CD4-positive, alpha-beta memory T cell (primary cell): ENCODE measurements at regions of chr17 and their contacts with region 1.

Region 1: DNA sequence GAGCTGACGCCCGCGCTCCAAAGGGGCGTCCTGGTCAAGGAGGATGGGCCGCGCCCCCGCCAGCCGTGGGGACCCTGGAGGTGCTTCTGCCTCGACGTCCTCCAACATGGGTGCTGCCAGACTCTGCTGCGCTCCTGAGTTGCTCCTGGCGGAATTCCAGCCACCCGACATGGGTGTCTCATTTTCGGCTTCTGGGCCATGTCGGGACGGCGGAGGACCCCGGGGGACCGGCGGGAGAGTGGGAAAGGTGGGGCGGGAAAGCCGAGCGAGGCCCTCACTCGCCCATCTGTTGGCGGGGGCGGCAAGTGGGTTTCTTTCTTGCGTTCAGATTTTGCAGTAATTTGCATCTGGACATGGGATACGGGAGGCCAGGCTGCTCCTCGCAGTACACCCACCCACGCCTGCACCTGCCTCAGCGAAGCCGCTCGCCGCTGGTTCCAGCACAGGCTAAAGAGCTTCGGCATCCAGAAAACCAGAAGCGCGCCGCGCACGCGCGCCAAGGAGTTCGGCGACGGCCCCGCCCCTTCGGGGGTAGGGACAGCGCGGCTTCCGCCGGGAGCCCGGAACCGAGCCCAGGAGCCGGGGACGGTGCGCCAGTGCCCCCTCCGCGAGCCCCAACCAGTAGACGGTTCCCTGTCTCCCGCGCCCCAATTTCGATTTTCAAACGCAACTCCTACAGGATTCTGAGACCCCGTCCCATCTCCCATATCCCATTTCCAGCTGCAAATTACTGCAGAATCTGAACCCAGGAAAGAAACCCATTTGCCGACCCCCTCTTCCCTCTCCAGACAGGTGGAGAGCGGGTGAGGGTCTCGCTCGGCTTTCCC is at the start of gene ARMC7:
- DNase-seq: peak; percentile 85 to 89 (median 88)
- H3K4me3 ChIP-seq: peak within 1 kb of the TSS; percentile 69 to 84
- H3K4me3 Mint-ChIP-seq: peak within 1 kb of the TSS; percentile 88 to 93 (median 91)
- H3K27ac ChIP-seq: peak within 1 kb of the TSS; percentile 60
- H3K27ac Mint-ChIP-seq: peak within 1 kb of the TSS; percentile 76 to 96 (median 92)
- H3K4me1 ChIP-seq: peaks cover 41% of the 10 kb centered on the region
- H3K4me1 Mint-ChIP-seq: peaks cover 22 to 42% (median 31%) of the 10 kb centered on the region in 4 donors
- H3K27me3 ChIP-seq: no peaks in the 10 kb centered on the region
- H3K27me3 Mint-ChIP-seq: no peaks in the 10 kb centered on the region
- total RNA-seq, gene ARMC7: 20.0 to 21.9 TPM

Region 2: GRCh38 chr17:74961657-74962490 is 147.7 kb before region 1 on chr17:
- CTCF ChIA-PET with region 1: interaction called, 89 read pairs
- POLR2A ChIA-PET with region 1: interaction called, 4 read pairs
- intact Hi-C with region 1: loop called (anchors 1 kb)
- DNase-seq: peak; percentile 76 to 80 (median 77)
- H3K4me3 ChIP-seq: no peak overlapping the region
- H3K4me3 Mint-ChIP-seq: peak overlapping the region in 1 of 8 donors; percentile 31
- H3K27ac ChIP-seq: no peak overlapping the region
- H3K27ac Mint-ChIP-seq: peak overlapping the region in 2 of 7 donors; percentile 59 to 66
- H3K4me1 ChIP-seq: peaks cover 6% of the 10 kb centered on the region
- H3K4me1 Mint-ChIP-seq: peaks cover 4 to 13% (median 8%) of the 10 kb centered on the region in 4 donors
- H3K27me3 ChIP-seq: no peaks in the 10 kb centered on the region
- H3K27me3 Mint-ChIP-seq: no peaks in the 10 kb centered on the region

Region 3: DNA sequence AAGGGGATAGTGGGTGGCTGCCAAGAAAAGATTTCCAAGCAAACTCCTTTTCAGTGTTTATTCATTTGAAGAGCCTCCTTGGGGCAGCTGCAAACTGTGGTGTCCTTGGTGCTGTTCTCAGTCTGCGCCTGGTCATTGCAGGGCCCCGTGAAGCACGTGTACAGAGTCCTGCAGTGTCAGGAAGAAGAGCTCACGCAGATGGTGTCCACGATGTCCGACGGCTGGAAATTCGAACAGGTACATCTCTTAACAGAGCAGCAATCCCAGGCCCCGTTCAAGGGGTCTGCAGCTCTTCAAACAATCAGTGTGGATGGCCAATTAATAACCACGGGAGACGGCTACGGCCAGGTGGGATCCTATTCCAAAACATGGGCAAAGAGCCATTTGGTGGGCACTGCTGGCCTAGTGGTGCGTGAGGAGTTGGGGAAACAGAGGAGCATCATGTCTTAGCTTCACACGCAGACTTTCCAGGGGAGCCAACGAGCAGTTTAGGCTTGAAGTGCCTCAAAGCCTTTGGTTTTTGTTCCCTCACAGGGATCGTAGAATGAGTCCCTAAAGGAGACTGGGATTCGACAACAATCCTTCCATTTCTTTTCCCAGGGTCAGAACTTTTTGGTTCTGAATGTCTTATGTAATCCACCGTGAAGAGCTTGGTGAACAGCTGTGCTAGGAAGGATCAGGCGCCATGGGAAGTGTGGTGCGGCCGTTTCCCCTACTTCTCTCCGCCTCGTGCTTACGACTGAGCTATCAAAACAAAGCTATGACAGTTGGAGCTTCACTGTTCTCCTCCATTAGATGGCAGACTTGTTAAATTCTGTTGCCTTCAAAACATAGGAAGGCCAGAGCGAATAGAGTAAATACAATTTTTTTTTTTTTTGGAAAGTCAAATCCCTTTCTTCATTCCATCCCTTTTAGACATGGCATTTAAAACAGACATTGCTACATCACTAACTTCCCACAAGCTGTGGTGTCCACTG is 50.0 kb before region 1 on chr17:
- CTCF ChIA-PET with region 1: interaction called, 17 read pairs
- POLR2A ChIA-PET with region 1: interaction called, 3 read pairs
- intact Hi-C with region 1: no loop called
- DNase-seq: peak in 2 of 5 donors; percentile 20 to 26
- H3K4me3 ChIP-seq: no peak overlapping the region
- H3K4me3 Mint-ChIP-seq: no peak overlapping the region
- H3K27ac ChIP-seq: no peak overlapping the region
- H3K27ac Mint-ChIP-seq: peak overlapping the region in 2 of 7 donors; percentile 61 to 78
- H3K4me1 ChIP-seq: no peaks in the 10 kb centered on the region
- H3K4me1 Mint-ChIP-seq: peaks cover 0 to 18% (median 8%) of the 10 kb centered on the region in 4 donors
- H3K27me3 ChIP-seq: no peaks in the 10 kb centered on the region
- H3K27me3 Mint-ChIP-seq: no peaks in the 10 kb centered on the region

Region 4: DNA sequence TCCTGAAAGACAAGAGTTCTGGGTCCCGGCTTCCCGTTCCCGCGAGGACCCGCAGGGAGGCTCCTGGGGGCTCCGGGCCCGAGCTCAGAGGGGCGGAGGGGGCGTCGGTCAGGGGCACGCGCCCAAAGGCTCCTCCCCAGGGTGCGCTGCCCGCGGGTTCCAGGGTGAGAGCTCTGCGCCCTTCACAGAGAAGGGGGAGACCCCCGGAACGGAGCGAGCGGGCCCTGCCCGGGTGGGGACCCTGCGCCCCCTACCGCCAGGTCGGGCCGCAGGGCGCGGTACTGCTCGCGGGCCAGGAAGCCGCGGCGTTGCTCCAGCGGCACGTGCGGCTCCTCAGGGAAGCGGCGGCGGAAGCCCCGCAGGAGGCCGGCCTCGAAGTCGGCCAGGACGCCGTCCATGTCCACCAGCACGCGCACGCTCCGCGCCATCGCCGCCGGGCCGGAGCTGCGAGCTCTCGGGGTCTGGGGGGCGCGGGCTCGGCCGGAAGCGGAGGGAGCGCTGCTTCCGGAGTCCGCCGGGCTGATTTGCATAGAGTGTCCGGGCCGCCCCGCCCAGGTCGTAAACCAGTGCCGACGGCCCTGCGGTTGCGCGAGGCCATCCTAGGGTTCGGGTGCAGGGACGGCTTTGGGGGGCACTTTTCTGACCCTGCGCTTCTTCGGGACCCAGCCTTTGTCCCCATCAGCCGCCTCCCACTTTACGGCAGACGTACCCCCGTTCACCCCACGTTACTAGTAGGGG is 21.8 kb after region 1 on chr17 and contains the start of gene NT5C:
- CTCF ChIA-PET with region 1: interaction called, 127 read pairs
- POLR2A ChIA-PET with region 1: interaction called, 97 read pairs
- intact Hi-C with region 1: loop called (anchors 1 kb)
- DNase-seq: peak in 4 of 5 donors; percentile 38 to 60 (median 49)
- H3K4me3 ChIP-seq: peak within 1 kb of the TSS; percentile 61 to 74
- H3K4me3 Mint-ChIP-seq: peak within 1 kb of the TSS; percentile 87 to 91 (median 90)
- H3K27ac ChIP-seq: peak within 1 kb of the TSS; percentile 80
- H3K27ac Mint-ChIP-seq: peak within 1 kb of the TSS; percentile 81 to 92 (median 88)
- H3K4me1 ChIP-seq: peaks cover 16% of the 10 kb centered on the region
- H3K4me1 Mint-ChIP-seq: peaks cover 8 to 19% (median 11%) of the 10 kb centered on the region in 4 donors
- H3K27me3 ChIP-seq: no peaks in the 10 kb centered on the region
- H3K27me3 Mint-ChIP-seq: no peaks in the 10 kb centered on the region
- total RNA-seq, gene NT5C: 40.1 to 46.6 TPM

Region 5: GRCh38 chr17:75173526-75173925 is 63.9 kb after region 1 on chr17:
- CTCF ChIA-PET with region 1: interaction called, 325 read pairs
- POLR2A ChIA-PET with region 1: interaction called, 29 read pairs
- intact Hi-C with region 1: loop called (anchors 1 kb)
- DNase-seq: no peak
- H3K4me3 ChIP-seq: no peak overlapping the region
- H3K4me3 Mint-ChIP-seq: no peak overlapping the region
- H3K27ac ChIP-seq: no peak overlapping the region
- H3K27ac Mint-ChIP-seq: peak overlapping the region in 4 of 7 donors; percentile 29 to 75 (median 38)
- H3K4me1 ChIP-seq: peaks cover 9% of the 10 kb centered on the region
- H3K4me1 Mint-ChIP-seq: peaks cover 7 to 26% (median 11%) of the 10 kb centered on the region in 4 donors
- H3K27me3 ChIP-seq: no peaks in the 10 kb centered on the region
- H3K27me3 Mint-ChIP-seq: no peaks in the 10 kb centered on the region

Region 6: GRCh38 chr17:75219815-75220214 is 110.2 kb after region 1 on chr17:
- CTCF ChIA-PET with region 1: interaction called, 10 read pairs
- POLR2A ChIA-PET with region 1: no interaction called
- intact Hi-C with region 1: no loop called
- DNase-seq: no peak
- H3K4me3 ChIP-seq: no peak overlapping the region
- H3K4me3 Mint-ChIP-seq: no peak overlapping the region
- H3K27ac ChIP-seq: no peak overlapping the region
- H3K27ac Mint-ChIP-seq: peak overlapping the region in 3 of 7 donors; percentile 52 to 75 (median 52)
- H3K4me1 ChIP-seq: no peaks in the 10 kb centered on the region
- H3K4me1 Mint-ChIP-seq: peaks cover 0 to 3% (median 0%) of the 10 kb centered on the region in 4 donors
- H3K27me3 ChIP-seq: no peaks in the 10 kb centered on the region
- H3K27me3 Mint-ChIP-seq: no peaks in the 10 kb centered on the region

Region 7: DNA sequence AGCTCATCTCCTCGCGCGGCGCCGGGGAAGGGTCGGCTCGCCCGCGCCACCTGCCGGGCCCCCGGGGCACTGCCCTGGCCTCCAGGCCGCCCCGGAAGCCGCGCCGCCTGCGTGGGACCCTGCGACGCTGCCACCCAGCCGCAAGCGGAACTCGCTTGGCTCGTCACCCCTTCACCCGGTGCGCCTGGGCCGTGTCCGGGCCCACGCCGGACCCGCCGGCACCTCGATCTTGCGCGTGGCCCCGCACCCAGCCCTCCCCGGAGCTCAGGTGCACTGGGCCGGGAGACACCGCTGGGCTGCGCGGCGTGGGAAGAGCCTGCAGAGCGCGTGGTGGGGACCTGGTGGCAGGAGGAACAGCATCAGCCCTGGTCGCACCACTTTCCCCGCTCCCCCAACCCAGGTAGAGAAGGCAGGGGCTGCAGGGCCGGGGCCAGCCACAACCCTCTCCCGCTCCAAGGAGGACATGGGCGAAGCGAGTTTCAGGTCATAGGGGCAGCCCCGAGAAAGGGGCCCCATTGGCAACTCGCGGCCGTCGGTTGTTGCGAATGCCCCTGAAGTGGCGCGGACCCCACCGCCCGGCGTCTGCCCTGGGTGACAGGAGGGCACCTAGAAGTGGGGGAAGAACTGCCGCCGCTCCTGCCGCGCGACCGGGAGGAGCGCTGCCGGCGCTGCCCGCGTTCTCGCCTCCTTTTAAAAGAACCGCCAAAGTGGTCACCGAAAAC is 161.8 kb after region 1 on chr17:
- CTCF ChIA-PET with region 1: interaction called, 25 read pairs
- POLR2A ChIA-PET with region 1: interaction called, 19 read pairs
- intact Hi-C with region 1: no loop called
- DNase-seq: peak; percentile 86 to 94 (median 88)
- H3K4me3 ChIP-seq: peak overlapping the region; percentile 42 to 82
- H3K4me3 Mint-ChIP-seq: peak overlapping the region; percentile 80 to 91 (median 84)
- H3K27ac ChIP-seq: peak overlapping the region; percentile 89
- H3K27ac Mint-ChIP-seq: peak overlapping the region; percentile 25 to 94 (median 88)
- H3K4me1 ChIP-seq: peaks cover 27% of the 10 kb centered on the region
- H3K4me1 Mint-ChIP-seq: peaks cover 10 to 35% (median 22%) of the 10 kb centered on the region in 4 donors
- H3K27me3 ChIP-seq: no peaks in the 10 kb centered on the region
- H3K27me3 Mint-ChIP-seq: no peaks in the 10 kb centered on the region

Region 8: GRCh38 chr17:75309025-75309772 is 199.6 kb after region 1 on chr17:
- CTCF ChIA-PET with region 1: no interaction called
- POLR2A ChIA-PET with region 1: no interaction called
- intact Hi-C with region 1: no loop called
- DNase-seq: no peak
- H3K4me3 ChIP-seq: no peak overlapping the region
- H3K4me3 Mint-ChIP-seq: no peak overlapping the region
- H3K27ac ChIP-seq: no peak overlapping the region
- H3K27ac Mint-ChIP-seq: peak overlapping the region in 1 of 7 donors; percentile 22
- H3K4me1 ChIP-seq: no peaks in the 10 kb centered on the region
- H3K4me1 Mint-ChIP-seq: peaks cover 0 to 2% (median 0%) of the 10 kb centered on the region in 4 donors
- H3K27me3 ChIP-seq: no peaks in the 10 kb centered on the region
- H3K27me3 Mint-ChIP-seq: no peaks in the 10 kb centered on the region